ENCODE measurements at regions of chr17 and their contacts with region 1.

Region 1: DNA sequence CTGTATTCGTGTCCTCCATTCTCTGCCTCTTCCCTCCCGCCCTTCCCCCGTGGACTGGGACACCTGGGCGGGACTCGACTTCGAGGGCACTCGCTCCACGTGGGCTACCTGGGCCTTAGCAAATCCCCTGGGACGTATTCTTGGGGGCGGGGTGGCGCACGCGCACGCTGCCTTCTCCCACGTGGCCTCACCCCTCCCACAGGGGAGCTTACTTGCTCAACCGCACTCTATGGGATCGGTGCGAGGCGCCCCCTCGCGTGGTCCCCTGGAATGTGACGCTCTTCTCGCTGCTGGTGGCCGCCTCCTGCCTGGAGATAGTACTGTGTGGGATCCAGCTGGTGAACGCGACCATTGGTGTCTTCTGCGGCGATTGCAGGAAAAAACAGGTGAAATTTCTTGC is 3.5 kb downstream of the VMO1 start:
- DNase-seq: peak in 1 of 5 donors; percentile 71
- ATAC-seq: peak in 1 of 4 donors; percentile 26
- H3K4me3 ChIP-seq: no peak overlapping the region
- H3K27ac ChIP-seq: no peak overlapping the region
- H3K4me1 ChIP-seq: peaks cover 0 to 28% (median 25%) of the 10 kb centered on the region in 12 donors
- H3K27me3 ChIP-seq: peaks cover 0 to 63% (median 40%) of the 10 kb centered on the region in 9 donors
- CTCF ChIP-seq: no peak
- POLR2A ChIP-seq: no peak

Region 2: DNA sequence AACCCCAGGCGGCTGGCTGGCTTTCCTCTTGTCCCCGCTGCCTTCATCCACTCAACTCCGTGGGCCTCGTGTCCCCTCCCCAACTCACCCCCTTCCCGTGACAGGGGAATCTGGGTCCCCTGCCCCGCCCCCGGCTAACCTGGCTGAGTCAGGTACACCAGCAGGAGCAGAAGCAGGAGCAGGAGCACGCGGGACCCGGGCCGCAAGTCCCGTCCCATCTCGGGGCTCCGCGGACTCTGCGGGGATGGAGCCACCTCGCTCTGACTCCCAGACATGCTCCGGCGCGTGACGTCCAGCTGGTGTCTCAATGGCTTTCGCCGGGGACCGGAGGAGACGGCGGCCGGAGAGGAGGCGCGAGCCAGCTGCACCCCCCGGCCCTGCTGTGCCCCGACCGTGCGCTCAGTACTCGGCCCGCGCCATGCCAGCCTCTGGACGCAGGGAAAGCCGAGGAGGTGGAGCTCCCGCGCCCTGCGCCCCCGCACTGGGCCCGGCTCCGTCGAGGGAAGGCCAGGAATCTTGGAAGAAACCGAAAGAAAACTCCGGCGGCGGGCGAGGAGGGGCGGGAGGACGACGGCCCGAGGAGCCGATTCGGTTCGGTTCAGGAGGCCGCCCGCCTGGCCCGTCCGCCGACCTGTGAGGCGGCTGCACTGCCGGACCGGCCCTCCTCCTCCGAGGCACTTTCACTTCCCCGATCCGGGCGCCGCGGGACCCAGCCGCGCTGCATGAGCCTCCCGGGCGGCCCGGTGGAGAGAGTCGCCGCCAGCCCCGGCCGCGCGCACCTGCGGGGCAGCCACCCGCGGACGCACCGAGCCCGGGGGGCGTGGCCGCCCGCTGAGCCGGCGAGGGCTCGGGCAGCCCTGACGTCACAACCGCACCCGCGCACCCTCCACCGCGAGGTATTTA is 43.3 kb before region 1 on chr17 and contains the starts of genes CXCL16 and ZMYND15:
- intact Hi-C with region 1: loop called in 7 of 10 experiments (anchors 5 to 10 kb)
- DNase-seq: peak; percentile 47 to 83 (median 57)
- ATAC-seq: peak in 3 of 4 donors; percentile 63 to 72 (median 63)
- H3K4me3 ChIP-seq: peak within 1 kb of the TSS; percentile 62 to 94 (median 84)
- H3K27ac ChIP-seq: peak within 1 kb of the TSS in 8 of 12 donors; percentile 14 to 77 (median 57)
- H3K4me1 ChIP-seq: peaks cover 0 to 39% (median 10%) of the 10 kb centered on the region in 12 donors
- H3K27me3 ChIP-seq: peaks cover 0 to 30% (median 4%) of the 10 kb centered on the region in 9 donors
- CTCF ChIP-seq: no peak
- POLR2A ChIP-seq: no peak
- total RNA-seq, gene CXCL16: 1.6 to 42.5 (median 4.5) TPM
- total RNA-seq, gene ZMYND15: 0.27 to 2.9 (median 0.44) TPM in 6 of 9 donors, not detected in the others

Region 3: DNA sequence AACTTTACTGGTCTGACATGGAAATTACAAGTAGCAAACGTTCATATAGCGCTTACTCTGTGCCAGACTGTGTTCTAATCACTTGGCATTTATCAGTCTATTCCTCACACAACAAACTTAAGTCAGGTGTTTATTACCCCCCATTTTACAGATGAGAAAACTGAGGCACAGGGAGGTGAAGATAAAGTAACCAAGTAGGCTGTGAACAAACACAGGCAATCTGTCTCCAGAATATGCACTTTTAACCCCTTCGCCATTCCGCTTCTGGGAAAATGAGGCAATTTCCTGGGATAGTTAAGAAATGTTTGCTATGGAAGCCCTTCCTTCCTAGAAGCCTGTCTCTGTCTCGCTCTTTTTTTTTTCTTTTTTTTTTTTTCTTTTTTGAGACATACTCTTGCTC is 30.7 kb before region 1 on chr17:
- intact Hi-C with region 1: no loop called
- DNase-seq: no peak
- ATAC-seq: no peak
- H3K4me3 ChIP-seq: no peak overlapping the region
- H3K27ac ChIP-seq: no peak overlapping the region
- H3K4me1 ChIP-seq: peaks cover 0 to 24% (median 0%) of the 10 kb centered on the region in 12 donors
- H3K27me3 ChIP-seq: peaks cover 0 to 22% (median 12%) of the 10 kb centered on the region in 9 donors
- CTCF ChIP-seq: no peak
- POLR2A ChIP-seq: no peak

Region 4: DNA sequence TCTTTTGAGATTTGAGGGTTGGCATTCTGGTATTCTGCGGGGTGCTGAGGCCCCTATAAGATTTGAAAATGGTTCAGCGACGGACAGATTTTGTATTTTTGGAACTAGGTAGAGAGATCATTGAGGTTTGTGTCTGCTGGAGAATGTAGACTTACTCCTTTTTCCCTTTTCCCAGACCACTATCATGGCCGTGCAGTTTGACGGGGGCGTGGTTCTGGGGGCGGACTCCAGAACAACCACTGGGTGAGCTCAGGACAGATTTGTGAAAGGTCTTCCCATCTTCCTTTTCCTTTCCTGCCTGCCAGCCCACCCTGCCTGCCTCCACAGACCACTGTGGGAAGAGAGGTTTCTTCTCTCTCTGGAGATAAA is 13.9 kb after region 1 on chr17:
- intact Hi-C with region 1: no loop called
- DNase-seq: peak in 1 of 5 donors; percentile 57
- ATAC-seq: peak in 2 of 4 donors; percentile 36 to 66
- H3K4me3 ChIP-seq: peak overlapping the region; percentile 38 to 99 (median 78)
- H3K27ac ChIP-seq: peak overlapping the region; percentile 3 to 89 (median 80)
- H3K4me1 ChIP-seq: peaks cover 0 to 16% (median 7%) of the 10 kb centered on the region in 12 donors
- H3K27me3 ChIP-seq: no peaks in the 10 kb centered on the region
- CTCF ChIP-seq: no peak
- POLR2A ChIP-seq: no peak

Measured in heart left ventricle (tissue), 16 donors.